Activated B cell treated with CpG ODN at 0.5 μM for 24 hours (primary cell): ENCODE measurements at regions of chr11 and their contacts with region 1.

Region 1: GRCh38 chr11:94897330-94897768 is 76.0 kb downstream of the CWC15 start:
- DNase-seq: no peak
- ATAC-seq: peak; percentile 50
- H3K4me3 Mint-ChIP-seq: no peak overlapping the region
- H3K27ac Mint-ChIP-seq: no peak overlapping the region
- H3K4me1 Mint-ChIP-seq: no peaks in the 10 kb centered on the region
- H3K27me3 Mint-ChIP-seq: peaks cover 4% of the 10 kb centered on the region
- CTCF ChIP-seq: peak; percentile 54

Region 2: DNA sequence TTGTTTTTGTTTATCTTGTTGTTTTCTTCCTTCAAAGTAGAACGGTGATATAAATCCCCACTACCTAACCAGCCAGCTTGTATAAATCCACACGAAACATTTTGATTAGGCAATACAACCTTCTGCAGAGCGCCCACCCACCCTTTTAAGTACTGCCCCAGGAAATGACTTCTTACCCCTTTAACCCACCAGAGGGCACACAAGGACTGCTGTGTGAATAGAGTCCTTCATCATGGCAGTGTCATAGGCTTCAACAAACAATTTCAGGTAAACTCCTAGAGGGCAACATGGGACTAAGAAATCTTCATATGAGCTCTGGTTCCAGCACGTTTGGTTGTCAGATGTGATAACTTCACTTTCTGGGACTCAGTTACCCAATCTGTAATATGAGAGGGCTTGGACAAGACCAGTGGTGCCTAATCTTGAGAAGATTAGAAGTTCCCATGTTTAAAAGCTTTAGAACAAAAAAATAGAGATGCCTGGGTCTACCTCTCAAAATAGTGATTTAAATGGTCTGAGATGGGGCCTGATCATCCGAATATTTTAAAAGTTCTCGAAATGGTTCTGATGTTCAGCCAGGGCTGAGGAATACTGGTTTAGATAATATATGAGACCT is 274.1 kb before region 1 on chr11:
- CTCF ChIA-PET with region 1: interaction called, 10 read pairs
- POLR2A ChIA-PET with region 1: no interaction called
- intact Hi-C with region 1: no loop called
- DNase-seq: no peak
- ATAC-seq: peak; percentile 58
- H3K4me3 Mint-ChIP-seq: no peak overlapping the region
- H3K27ac Mint-ChIP-seq: no peak overlapping the region
- H3K4me1 Mint-ChIP-seq: no peaks in the 10 kb centered on the region
- H3K27me3 Mint-ChIP-seq: peaks cover 14% of the 10 kb centered on the region
- CTCF ChIP-seq: no peak

Region 3: DNA sequence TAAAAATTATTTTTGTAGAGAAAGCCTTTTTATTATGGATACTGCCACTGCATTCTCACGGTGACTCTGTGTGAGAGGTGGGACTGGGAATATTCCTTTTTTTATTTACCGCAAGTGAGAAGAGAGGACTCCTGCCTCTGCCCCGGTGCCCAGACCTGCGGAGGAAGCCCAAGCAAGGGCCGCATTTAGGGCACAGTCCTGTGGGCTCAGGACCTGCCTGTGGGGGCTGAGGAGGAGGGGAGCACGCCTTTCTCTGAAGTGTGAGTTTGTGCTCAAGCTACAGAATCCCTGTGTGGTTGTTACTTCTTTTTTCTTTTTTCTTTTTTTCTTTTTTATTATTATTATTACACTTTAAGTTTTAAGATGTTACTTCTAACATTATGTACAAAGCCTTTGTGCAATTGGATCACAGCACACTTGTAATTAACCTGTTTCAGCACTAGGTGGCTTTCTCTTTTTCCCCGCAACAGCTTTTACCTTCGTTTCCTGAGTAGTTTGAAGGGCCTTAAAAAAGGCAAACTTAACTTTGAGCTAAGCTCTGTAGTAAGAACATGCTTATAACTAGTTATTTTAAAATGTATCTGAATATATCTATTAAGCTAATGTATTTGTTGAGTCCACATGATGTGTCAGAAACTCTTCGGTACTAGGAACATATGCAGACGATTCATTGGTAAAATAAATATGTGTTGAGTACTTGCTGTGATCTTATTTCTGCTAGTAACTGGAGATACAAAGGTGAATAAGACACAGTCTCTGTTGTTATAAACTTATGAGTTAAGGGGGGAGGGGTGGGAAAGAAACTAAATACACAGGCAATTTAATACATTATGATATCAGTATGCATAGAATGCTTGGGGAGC is 110.9 kb before region 1 on chr11:
- CTCF ChIA-PET with region 1: interaction called, 9 read pairs
- POLR2A ChIA-PET with region 1: no interaction called
- intact Hi-C with region 1: loop called (anchors 1 kb)
- DNase-seq: no peak
- ATAC-seq: peak; percentile 42
- H3K4me3 Mint-ChIP-seq: no peak overlapping the region
- H3K27ac Mint-ChIP-seq: no peak overlapping the region
- H3K4me1 Mint-ChIP-seq: no peaks in the 10 kb centered on the region
- H3K27me3 Mint-ChIP-seq: no peaks in the 10 kb centered on the region
- CTCF ChIP-seq: no peak

Region 4: DNA sequence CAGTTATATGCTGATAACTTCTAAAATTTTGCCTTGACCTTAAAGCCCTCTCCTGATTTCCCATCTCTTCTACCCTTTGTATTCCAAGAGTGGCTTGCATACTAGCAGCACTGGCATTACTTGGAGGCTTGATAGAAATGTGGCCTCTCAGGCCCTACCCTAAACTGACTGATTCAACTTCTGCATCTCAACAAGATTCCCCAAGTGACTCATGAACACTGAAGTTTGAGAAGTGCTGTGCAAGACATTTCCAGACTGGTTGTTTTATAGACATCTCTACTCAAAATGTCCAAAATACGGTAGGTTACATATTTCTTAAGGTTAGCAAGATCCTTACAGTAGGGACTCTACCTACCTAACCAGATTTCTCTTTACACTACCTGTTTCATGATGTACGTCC is 285.0 kb after region 1 on chr11:
- CTCF ChIA-PET with region 1: no interaction called
- POLR2A ChIA-PET with region 1: no interaction called
- intact Hi-C with region 1: no loop called
- DNase-seq: no peak
- ATAC-seq: no peak
- H3K4me3 Mint-ChIP-seq: no peak overlapping the region
- H3K27ac Mint-ChIP-seq: peak overlapping the region; percentile 51
- H3K4me1 Mint-ChIP-seq: peaks cover 8% of the 10 kb centered on the region
- H3K27me3 Mint-ChIP-seq: no peaks in the 10 kb centered on the region
- CTCF ChIP-seq: no peak